ENCODE measurements at regions of chr5 and their contacts with region 1.

Region 1: DNA sequence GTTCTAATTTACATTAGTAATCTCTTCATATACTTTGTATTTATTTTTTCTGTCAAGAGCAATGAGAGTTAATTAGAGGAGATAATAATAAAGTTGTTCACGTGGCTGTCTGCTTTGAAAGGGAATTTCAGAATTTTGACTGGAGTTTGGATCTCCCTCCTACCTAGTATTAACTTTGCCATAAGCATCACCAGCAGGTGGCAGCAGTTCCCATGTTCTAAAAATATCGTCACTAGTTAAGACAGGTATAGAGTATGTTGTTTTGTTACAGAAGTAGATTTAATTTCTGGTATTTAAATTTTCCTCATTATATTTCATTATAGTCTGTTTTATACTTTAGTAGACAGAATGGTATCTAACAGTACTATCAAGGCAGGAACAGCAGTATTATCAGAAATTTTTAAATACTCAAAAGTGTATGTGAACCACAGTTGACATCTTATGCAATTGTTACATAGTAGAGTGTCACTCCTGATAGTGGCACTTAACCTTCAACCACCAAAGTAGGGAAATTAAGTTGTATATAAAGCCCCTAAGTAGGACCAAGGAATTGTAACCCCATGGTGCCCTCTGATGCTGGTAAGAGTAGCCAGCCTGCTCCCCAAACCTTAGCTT is 20.4 kb downstream of the GNPDA1 start:
- DNase-seq: peak; percentile 55

Region 2: DNA sequence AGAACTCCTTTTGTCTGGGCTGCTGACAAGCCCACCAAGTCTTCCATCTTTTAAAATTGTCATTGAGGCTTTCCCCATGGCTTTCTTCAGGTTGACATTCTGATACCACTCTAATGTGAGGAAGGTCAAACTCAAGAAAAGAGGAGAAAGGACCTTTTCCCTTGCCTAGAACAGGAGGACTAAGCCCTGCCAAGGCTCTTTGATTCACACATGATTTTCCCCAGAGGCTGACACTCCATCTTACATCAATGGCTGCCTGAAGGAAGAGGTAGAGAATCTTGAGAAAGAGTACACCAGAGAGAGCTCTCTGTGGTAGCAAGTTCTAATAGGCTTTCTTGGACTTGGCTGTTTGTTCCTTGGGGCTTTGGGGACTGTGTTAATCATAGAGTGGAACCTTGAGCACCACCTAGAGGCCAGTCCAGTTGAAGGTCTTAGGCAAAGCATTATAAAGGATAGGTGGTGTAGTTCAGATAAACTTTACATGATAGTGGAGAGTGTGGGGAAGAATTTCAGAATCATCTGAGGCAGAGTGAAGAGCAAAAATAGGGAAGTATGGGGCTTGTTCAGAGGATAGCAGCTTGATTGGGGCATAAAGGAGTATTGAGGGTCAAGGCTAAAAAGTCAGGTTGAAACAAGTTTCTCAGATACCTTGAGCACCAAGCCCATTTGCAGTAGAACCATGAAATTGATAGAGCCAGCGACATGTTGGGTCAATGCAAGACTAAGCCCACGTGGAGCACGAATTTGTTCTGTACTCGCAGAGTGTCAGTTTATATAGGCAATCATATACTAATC is 152.8 kb after region 1 on chr5:
- in situ Hi-C with region 1: loop called (anchors 25 kb)
- DNase-seq: peak; percentile 56

Measured in ACHN (cell line).